Heart right ventricle (tissue), 16 donors: ENCODE measurements at regions of chr1 and their contacts with region 1.

Region 1: DNA sequence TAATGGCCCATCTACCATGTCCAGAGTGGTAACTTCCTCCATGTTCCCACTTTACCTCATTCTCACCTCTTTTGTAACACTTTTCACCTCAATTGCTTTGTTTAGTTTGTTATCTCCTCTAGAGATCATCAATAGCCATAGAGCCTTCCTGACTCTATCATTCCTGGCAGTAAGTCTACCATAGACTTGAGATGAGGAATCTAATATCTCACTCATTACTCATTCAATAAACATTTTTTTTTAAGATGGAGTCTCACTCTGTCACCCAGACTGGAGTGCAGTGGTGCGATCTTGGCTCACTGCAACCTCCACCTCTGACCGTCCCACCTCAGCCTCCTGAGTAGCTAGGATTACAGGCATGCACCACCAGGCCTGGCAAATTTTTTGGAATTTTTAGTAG is 7.1 kb downstream of the NMNAT2 start:
- DNase-seq: no peak
- ATAC-seq: no peak
- H3K4me3 ChIP-seq: no peak overlapping the region
- H3K27ac ChIP-seq: no peak overlapping the region
- H3K4me1 ChIP-seq: peaks cover 0 to 10% (median 0%) of the 10 kb centered on the region in 9 donors
- H3K27me3 ChIP-seq: peaks cover 0 to 28% (median 5%) of the 10 kb centered on the region in 7 donors
- CTCF ChIP-seq: no peak

Region 2: GRCh38 chr1:183291802-183292514 is 119.1 kb before region 1 on chr1:
- intact Hi-C with region 1: loop called in 1 of 10 experiments (anchors 1 kb)
- DNase-seq: no peak
- ATAC-seq: peak in 3 of 8 donors; percentile 19 to 39 (median 32)
- H3K4me3 ChIP-seq: no peak overlapping the region
- H3K27ac ChIP-seq: peak overlapping the region in 8 of 10 donors; percentile 14 to 71 (median 55)
- H3K4me1 ChIP-seq: peaks cover 3 to 48% (median 26%) of the 10 kb centered on the region in 9 donors
- H3K27me3 ChIP-seq: no peaks in the 10 kb centered on the region
- CTCF ChIP-seq: no peak